ENCODE measurements at regions of chr9 and their contacts with region 1.

Region 1: GRCh38 chr9:469672-470551 is 255.2 kb downstream of the DOCK8 start:
- DNase-seq: peak; percentile 93
- ATAC-seq: peak; percentile 99

Region 2: GRCh38 chr9:522658-523057 is 52.7 kb after region 1 on chr9:
- intact Hi-C with region 1: loop called (anchors 5 kb)
- DNase-seq: no peak
- ATAC-seq: peak; percentile 85